GM18951 (cell line): ENCODE measurements at regions of chr22 and their contacts with region 1.

Region 1: DNA sequence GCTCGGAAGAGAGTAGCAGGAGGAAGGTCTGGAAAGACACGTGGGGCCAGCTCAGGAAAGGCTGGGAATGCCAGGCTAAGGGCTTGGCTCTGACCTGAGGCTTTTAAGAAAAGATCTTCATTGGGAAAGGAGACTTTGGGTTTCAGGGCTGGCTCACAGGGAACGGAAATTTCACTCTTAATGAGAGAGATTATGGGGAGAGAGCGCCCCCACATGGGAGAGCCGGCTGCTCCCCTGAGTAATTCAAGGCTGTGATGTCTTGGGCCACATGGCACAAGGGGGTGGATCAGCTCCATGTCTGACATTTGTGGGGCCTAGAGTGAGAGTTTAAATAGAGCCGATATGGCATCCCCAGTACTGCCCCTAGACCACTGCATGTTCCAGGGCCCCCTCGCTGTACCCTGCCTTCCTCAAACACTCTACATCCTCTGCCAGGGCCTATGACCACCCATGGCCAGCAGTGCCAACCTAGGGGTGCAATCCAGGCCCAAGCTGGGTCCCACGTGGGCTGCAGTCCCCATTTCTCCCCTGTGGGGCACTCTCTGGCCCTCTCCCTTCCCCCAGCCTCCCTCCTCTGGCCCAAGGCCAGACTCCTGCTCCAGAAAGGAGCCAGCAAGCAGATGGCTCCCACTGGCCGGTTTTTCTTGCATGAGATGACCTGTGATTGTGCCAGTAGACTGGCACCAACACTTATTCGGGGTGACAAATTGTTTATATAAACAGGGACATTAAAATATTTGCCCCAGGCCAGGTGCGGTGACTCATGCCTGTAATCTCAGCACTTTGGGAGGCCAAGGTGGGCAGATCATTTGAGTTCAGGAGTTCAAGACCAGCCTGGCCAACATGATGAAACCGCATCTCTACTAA is 75.2 kb downstream of the ISX start:
- POLR2A ChIP-seq: no peak

Region 2: GRCh38 chr22:34414484-34415440 is 726.4 kb before region 1 on chr22:
- in situ Hi-C with region 1: loop called (anchors 25 kb)
- POLR2A ChIP-seq: no peak

Region 3: GRCh38 chr22:35021161-35021560 is 120.0 kb before region 1 on chr22:
- in situ Hi-C with region 1: no loop called
- POLR2A ChIP-seq: no peak

Region 4: GRCh38 chr22:35552196-35552842 is 411.2 kb after region 1 on chr22:
- in situ Hi-C with region 1: no loop called
- POLR2A ChIP-seq: no peak